Dorsolateral prefrontal cortex (tissue), 120 donors: ENCODE measurements at regions of chr14 and their contacts with region 1.

Region 1: DNA sequence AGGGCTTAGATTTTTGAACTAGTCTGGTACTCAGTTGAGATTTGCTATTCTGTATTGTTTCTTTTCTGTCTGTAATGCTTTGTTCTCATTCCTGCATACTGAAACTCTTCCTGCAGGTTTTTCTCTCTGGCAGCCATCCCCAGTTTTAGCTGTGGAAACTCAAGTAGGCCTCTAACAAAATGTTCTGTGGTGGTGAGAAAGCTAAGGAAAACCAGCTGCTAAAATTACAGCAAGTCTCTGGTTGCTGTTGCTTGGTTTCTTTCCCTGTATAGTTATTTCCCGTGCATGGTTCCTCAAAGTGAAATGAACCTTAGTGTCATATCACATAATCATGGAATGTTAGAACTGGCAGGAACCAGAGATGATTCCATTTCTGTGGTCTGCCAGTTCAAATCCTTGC is 442.5 kb downstream of the NRXN3 start:
- DNase-seq: peak in 2 of 10 donors; percentile 35 to 62
- H3K4me3 ChIP-seq: no peak overlapping the region
- H3K27ac ChIP-seq: peak overlapping the region in 56 of 59 donors; percentile 2 to 86 (median 65)
- H3K27me3 ChIP-seq: no peaks in the 10 kb centered on the region
- CTCF ChIP-seq: no peak

Region 2: GRCh38 chr14:78543433-78543832 is 69.2 kb before region 1 on chr14:
- intact Hi-C with region 1: no loop called
- DNase-seq: no peak
- H3K4me3 ChIP-seq: no peak overlapping the region
- H3K27ac ChIP-seq: no peak overlapping the region
- H3K27me3 ChIP-seq: no peaks in the 10 kb centered on the region
- CTCF ChIP-seq: no peak

Region 3: GRCh38 chr14:78836777-78837176 is 224.1 kb after region 1 on chr14:
- intact Hi-C with region 1: loop called in 1 of 2 experiments (anchors 10 kb)
- DNase-seq: peak in 8 of 10 donors; percentile 5 to 75 (median 53)
- H3K4me3 ChIP-seq: no peak overlapping the region
- H3K27ac ChIP-seq: peak overlapping the region in 32 of 59 donors; percentile 2 to 84 (median 64)
- H3K27me3 ChIP-seq: no peaks in the 10 kb centered on the region
- CTCF ChIP-seq: peak; percentile 31 to 79 (median 62)